ENCODE measurements at regions of chr3 and their contacts with region 1.

Region 1: DNA sequence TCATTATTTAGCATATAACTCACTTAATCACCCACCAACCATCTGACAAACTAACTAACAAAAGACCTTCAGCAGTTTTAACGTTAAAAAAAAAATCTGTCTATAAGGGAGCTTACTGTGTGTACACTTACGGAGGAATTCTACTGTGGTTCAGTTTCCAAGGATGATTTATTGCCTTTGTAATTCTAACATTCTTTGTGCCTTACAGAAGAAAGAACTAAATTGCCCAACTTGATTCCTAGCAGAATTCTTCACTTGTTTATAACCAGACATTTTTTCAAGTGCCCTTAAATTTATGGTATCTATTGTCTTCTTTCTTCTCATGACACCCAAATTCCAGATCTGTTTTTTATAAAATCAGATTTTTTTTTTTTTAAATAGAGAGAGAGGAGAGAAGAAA is 119.7 kb upstream of the IGSF10 start:
- DNase-seq: peak in 1 of 2 experiments; percentile 51
- H3K4me3 ChIP-seq: no peak overlapping the region
- H3K4me3 Mint-ChIP-seq: peak overlapping the region; percentile 16
- H3K27ac Mint-ChIP-seq: peak overlapping the region; percentile 86
- H3K4me1 ChIP-seq: peaks cover 21% of the 10 kb centered on the region
- H3K4me1 Mint-ChIP-seq: peaks cover 35% of the 10 kb centered on the region
- H3K27me3 ChIP-seq: no peaks in the 10 kb centered on the region
- H3K27me3 Mint-ChIP-seq: no peaks in the 10 kb centered on the region
- CTCF ChIP-seq: no peak

Region 2: DNA sequence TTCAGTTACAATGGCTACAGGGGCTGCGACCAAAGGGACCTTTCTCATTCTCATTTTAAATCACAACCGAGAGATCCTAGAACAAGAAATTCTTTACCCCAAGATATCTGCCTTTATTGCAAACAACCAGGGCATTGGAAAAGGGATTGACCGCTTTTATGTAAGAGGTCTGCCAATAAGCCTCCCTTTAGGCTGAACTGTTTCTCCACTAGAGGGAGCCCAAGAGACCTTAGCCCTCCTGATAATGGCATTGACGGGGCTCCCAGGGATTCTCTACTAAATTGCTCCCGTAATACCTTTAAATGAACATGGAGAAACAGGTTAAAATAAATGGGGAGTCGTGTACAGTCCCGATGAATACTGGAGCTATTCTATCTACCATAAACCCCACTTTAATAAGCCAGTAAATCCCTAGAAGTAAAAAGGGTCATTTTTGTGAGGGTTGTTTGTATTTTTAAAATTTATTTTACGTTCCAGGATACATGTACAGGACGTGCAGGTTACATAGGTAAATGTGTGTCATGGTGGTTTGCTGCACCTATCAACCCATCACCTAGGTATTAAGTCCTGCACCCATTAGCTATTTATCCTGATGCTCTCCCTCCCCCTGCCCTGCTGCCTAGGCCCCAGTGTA is 112.2 kb before region 1 on chr3:
- CTCF ChIA-PET with region 1: no interaction called
- POLR2A ChIA-PET with region 1: no interaction called
- intact Hi-C with region 1: loop called (anchors 5 kb)
- DNase-seq: peak; percentile 54 to 78
- H3K4me3 ChIP-seq: no peak overlapping the region
- H3K4me3 Mint-ChIP-seq: no peak overlapping the region
- H3K27ac Mint-ChIP-seq: no peak overlapping the region
- H3K4me1 ChIP-seq: no peaks in the 10 kb centered on the region
- H3K4me1 Mint-ChIP-seq: no peaks in the 10 kb centered on the region
- H3K27me3 ChIP-seq: no peaks in the 10 kb centered on the region
- H3K27me3 Mint-ChIP-seq: no peaks in the 10 kb centered on the region
- CTCF ChIP-seq: peak; percentile 77 to 90

Region 3: DNA sequence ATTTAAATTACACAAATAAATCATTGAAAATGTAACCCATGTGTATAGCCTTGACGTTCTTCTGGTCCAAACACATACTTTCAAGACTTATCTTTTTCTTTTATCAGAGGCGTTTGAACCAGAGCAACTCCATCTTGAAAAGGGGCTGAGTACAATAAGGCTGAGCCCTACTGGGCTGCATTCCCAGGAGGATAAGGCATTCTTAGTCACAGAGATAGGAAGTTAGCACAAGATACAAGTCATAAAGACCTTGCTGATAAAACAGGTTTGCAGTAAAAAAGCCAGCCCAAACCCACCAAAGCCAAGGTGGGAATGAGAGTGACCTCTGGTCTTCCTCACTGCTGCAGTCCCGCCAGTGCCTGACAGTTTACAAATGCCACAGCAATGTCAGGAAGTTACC is 18.7 kb before region 1 on chr3:
- CTCF ChIA-PET with region 1: no interaction called
- POLR2A ChIA-PET with region 1: no interaction called
- intact Hi-C with region 1: loop called (anchors 2 kb)
- DNase-seq: peak; percentile 37 to 61
- H3K4me3 ChIP-seq: no peak overlapping the region
- H3K4me3 Mint-ChIP-seq: no peak overlapping the region
- H3K27ac Mint-ChIP-seq: peak overlapping the region; percentile 11
- H3K4me1 ChIP-seq: peaks cover 29% of the 10 kb centered on the region
- H3K4me1 Mint-ChIP-seq: peaks cover 15% of the 10 kb centered on the region
- H3K27me3 ChIP-seq: no peaks in the 10 kb centered on the region
- H3K27me3 Mint-ChIP-seq: no peaks in the 10 kb centered on the region
- CTCF ChIP-seq: no peak

Region 4: DNA sequence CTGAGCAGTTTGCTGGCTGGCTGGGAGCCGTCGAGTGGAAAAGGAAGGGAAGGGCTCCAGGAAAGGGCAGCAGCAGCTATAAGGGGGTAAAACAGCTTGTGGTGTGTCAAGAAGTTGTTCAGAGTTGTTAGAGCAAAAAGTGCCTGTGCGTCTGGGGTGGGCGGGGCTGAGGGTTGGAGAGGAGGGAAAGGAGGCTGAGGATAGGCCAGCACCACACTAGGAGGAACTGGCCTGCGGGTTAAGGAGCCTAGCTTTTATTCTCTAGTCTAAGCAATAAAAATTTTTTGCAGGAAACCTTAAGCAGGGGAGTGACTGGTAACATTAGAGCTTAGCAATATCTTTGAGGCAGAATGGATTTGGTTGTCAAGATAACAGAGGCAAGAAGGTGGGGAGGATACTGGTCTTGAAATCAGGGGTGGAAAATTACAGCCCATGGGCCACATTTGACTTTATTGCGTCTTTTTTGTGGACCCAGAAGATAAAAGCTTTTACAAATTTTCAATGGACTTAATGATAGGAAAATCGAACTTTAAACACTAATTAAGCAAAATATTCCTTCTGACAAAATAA is 18.6 kb after region 1 on chr3:
- CTCF ChIA-PET with region 1: no interaction called
- POLR2A ChIA-PET with region 1: no interaction called
- intact Hi-C with region 1: no loop called
- DNase-seq: peak in 1 of 2 experiments; percentile 37
- H3K4me3 ChIP-seq: no peak overlapping the region
- H3K4me3 Mint-ChIP-seq: no peak overlapping the region
- H3K27ac Mint-ChIP-seq: peak overlapping the region; percentile 21
- H3K4me1 ChIP-seq: no peaks in the 10 kb centered on the region; the same call in 1 of the 2 replicates
- H3K4me1 Mint-ChIP-seq: peaks cover 6% of the 10 kb centered on the region
- H3K27me3 ChIP-seq: no peaks in the 10 kb centered on the region
- H3K27me3 Mint-ChIP-seq: no peaks in the 10 kb centered on the region
- CTCF ChIP-seq: no peak

Region 5: GRCh38 chr3:151630938-151631441 is 50.4 kb after region 1 on chr3:
- CTCF ChIA-PET with region 1: no interaction called
- POLR2A ChIA-PET with region 1: interaction called, 3 read pairs
- intact Hi-C with region 1: loop called (anchors 1 kb)
- DNase-seq: peak; percentile 51 to 69
- H3K4me3 ChIP-seq: no peak overlapping the region
- H3K4me3 Mint-ChIP-seq: peak overlapping the region; percentile 37
- H3K27ac Mint-ChIP-seq: peak overlapping the region; percentile 91
- H3K4me1 ChIP-seq: peaks cover 39% of the 10 kb centered on the region
- H3K4me1 Mint-ChIP-seq: peaks cover 21% of the 10 kb centered on the region
- H3K27me3 ChIP-seq: no peaks in the 10 kb centered on the region
- H3K27me3 Mint-ChIP-seq: no peaks in the 10 kb centered on the region
- CTCF ChIP-seq: no peak

Region 6: GRCh38 chr3:151638555-151639417 is 58.2 kb after region 1 on chr3:
- CTCF ChIA-PET with region 1: interaction called, 3 read pairs
- POLR2A ChIA-PET with region 1: no interaction called
- intact Hi-C with region 1: loop called (anchors 2 kb)
- DNase-seq: peak; percentile 72 to 76
- H3K4me3 ChIP-seq: no peak overlapping the region
- H3K4me3 Mint-ChIP-seq: peak overlapping the region; percentile 14
- H3K27ac Mint-ChIP-seq: peak overlapping the region; percentile 59
- H3K4me1 ChIP-seq: peaks cover 31% of the 10 kb centered on the region
- H3K4me1 Mint-ChIP-seq: peaks cover 21% of the 10 kb centered on the region
- H3K27me3 ChIP-seq: no peaks in the 10 kb centered on the region
- H3K27me3 Mint-ChIP-seq: no peaks in the 10 kb centered on the region
- CTCF ChIP-seq: no peak

Region 7: GRCh38 chr3:151724576-151725562 is 144.3 kb after region 1 on chr3:
- CTCF ChIA-PET with region 1: no interaction called
- POLR2A ChIA-PET with region 1: no interaction called
- intact Hi-C with region 1: no loop called
- DNase-seq: no peak
- H3K4me3 ChIP-seq: no peak overlapping the region
- H3K4me3 Mint-ChIP-seq: no peak overlapping the region
- H3K27ac Mint-ChIP-seq: no peak overlapping the region
- H3K4me1 ChIP-seq: no peaks in the 10 kb centered on the region
- H3K4me1 Mint-ChIP-seq: no peaks in the 10 kb centered on the region
- H3K27me3 ChIP-seq: no peaks in the 10 kb centered on the region
- H3K27me3 Mint-ChIP-seq: no peaks in the 10 kb centered on the region
- CTCF ChIP-seq: no peak

Measured in Caco-2 (cell line).